HEK293T (cell line): ENCODE measurements at regions of chr3 and their contacts with region 1.

Region 1: GRCh38 chr3:189272504-189273119 is 100.8 kb downstream of the TPRG1 start:
- DNase-seq: no peak

Region 2: GRCh38 chr3:189947948-189948723 is 675.5 kb after region 1 on chr3:
- CTCF ChIA-PET with region 1: interaction called, 18 read pairs
- POLR2A ChIA-PET with region 1: no interaction called
- DNase-seq: no peak